Dendritic cell treated with granulocyte-macrophage colony-stimulating factor and Interleukin-4, amounts not matched to agents 40 ng/mL and 50 ng/mL, for 4 days (primary cell): ENCODE measurements at regions of chr3 and their contacts with region 1.

Region 1: GRCh38 chr3:77038468-77038929 is 1.4 kb upstream of the ROBO2 start:
- H3K4me3 Mint-ChIP-seq: no peak overlapping the region
- H3K27ac Mint-ChIP-seq: no peak overlapping the region
- H3K4me1 Mint-ChIP-seq: no peaks in the 10 kb centered on the region
- H3K27me3 Mint-ChIP-seq: peaks cover 46% of the 10 kb centered on the region

Region 2: GRCh38 chr3:76943058-76943457 is 95.4 kb before region 1 on chr3:
- intact Hi-C with region 1: no loop called
- H3K4me3 Mint-ChIP-seq: no peak overlapping the region
- H3K27ac Mint-ChIP-seq: no peak overlapping the region
- H3K4me1 Mint-ChIP-seq: no peaks in the 10 kb centered on the region
- H3K27me3 Mint-ChIP-seq: no peaks in the 10 kb centered on the region

Region 3: GRCh38 chr3:76997733-76998132 is 40.8 kb before region 1 on chr3:
- intact Hi-C with region 1: no loop called
- H3K4me3 Mint-ChIP-seq: no peak overlapping the region
- H3K27ac Mint-ChIP-seq: no peak overlapping the region
- H3K4me1 Mint-ChIP-seq: no peaks in the 10 kb centered on the region
- H3K27me3 Mint-ChIP-seq: no peaks in the 10 kb centered on the region

Region 4: GRCh38 chr3:77254967-77255831 is 216.7 kb after region 1 on chr3:
- intact Hi-C with region 1: loop called (anchors 10 kb)
- H3K4me3 Mint-ChIP-seq: no peak overlapping the region
- H3K27ac Mint-ChIP-seq: no peak overlapping the region
- H3K4me1 Mint-ChIP-seq: no peaks in the 10 kb centered on the region
- H3K27me3 Mint-ChIP-seq: no peaks in the 10 kb centered on the region